Calu3 (cell line): ENCODE measurements at regions of chr2 and their contacts with region 1.

Region 1: DNA sequence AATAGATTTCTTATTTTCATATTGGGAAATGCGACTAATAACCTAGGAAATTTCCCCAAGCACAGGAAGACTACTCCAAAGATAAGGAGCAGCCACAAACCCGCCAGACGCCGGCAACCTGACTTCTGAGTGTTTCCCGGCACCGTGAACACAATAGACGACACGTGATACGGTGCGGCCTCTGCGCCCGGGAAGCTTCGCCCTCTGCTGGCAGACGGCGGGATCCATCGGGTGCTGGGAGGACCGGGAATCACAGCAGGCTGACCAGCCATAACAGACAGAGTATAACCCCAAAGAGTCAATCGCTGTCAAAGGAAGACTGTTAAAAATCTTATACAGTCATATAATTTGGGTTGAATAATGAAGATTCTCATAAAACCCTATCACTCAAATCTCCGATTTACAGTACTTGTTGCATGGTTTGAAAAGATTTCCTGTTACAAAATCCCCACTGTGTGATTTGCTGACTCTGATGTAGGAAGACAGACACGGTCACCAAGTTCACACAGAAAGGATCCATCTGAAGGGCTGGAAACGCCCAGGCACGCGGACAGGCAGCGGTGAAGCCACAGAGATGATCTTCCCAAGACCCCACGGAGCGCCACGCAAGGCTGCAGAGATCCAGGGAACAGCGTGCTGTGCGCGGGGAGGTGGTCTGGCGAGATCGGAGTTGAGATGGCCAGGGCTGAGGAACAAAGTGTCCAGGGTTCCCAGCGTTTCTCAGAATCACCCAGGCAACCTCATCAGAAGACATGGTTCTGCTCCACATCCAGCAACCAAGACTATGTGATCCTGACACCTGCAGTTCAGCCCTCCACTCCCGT is 73.8 kb downstream of the EIPR1 start:
- DNase-seq: peak; percentile 89
- H3K4me3 Mint-ChIP-seq: no peak overlapping the region
- H3K27ac Mint-ChIP-seq: no peak overlapping the region
- H3K4me1 Mint-ChIP-seq: no peaks in the 10 kb centered on the region
- H3K27me3 Mint-ChIP-seq: no peaks in the 10 kb centered on the region
- CTCF ChIP-seq: peak; percentile 74

Region 2: DNA sequence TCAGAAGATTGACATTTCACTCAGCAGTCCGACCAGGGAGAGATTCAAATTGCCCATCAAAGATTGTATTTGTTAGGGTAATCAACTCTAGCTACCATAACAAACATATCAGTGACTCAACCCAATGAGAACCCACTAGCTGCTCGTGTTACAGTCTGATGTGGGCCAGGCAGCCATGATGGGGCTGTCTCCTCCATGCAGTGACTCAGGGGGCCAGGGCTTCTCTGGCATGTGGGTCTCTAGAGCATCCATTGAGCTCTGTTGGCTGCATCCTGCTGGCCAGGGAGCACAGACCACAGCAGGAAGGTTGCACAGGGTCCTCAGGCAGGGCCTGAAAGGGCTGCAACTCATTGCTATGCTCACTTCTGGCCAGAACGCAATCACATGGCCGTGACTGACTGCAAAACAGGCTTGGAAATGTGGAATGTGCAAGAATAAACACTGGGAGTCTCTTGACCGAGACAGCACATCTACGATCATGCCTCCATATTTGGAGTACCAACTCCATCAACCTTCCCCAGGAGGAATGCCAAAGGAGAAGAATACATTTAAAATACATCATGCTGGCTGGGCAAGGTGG is 143.0 kb before region 1 on chr2:
- CTCF ChIA-PET with region 1: no interaction called
- intact Hi-C with region 1: no loop called
- DNase-seq: no peak
- H3K4me3 Mint-ChIP-seq: no peak overlapping the region
- H3K27ac Mint-ChIP-seq: no peak overlapping the region
- H3K4me1 Mint-ChIP-seq: no peaks in the 10 kb centered on the region
- H3K27me3 Mint-ChIP-seq: no peaks in the 10 kb centered on the region
- CTCF ChIP-seq: no peak

Region 3: GRCh38 chr2:3379647-3380534 is 76.1 kb after region 1 on chr2 and contains the start of gene TRAPPC12:
- CTCF ChIA-PET with region 1: no interaction called
- intact Hi-C with region 1: loop called (anchors 2 kb)
- DNase-seq: peak; percentile 95
- H3K4me3 Mint-ChIP-seq: peak within 1 kb of the TSS; percentile 96
- H3K27ac Mint-ChIP-seq: peak within 1 kb of the TSS; percentile 92
- H3K4me1 Mint-ChIP-seq: peaks cover 15% of the 10 kb centered on the region
- H3K27me3 Mint-ChIP-seq: no peaks in the 10 kb centered on the region
- CTCF ChIP-seq: no peak
- total RNA-seq, gene TRAPPC12: 77.0 and 88.5 TPM in 2 replicates